Mammary epithelial cell (primary cell): ENCODE measurements at regions of chr18 and their contacts with region 1.

Region 1: DNA sequence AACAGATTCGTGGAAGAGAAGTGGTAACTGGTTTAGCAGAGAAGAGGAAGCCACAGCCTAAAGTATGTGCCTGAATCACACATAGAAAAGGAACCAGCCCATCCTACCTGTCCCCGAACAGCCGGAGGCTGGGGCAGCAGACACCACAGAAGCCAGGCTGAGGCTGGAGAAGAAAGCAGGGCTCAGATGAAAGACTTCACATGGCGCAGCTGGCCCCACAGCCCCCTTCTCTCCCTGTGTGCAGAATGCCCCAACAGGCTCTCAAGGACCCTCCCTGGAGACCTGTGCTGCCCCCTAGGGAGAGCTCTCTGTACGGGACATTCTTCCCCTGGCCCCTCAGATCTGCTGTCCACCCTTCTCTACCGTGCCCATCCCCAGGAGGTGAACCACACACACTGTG is 83.5 kb upstream of the RAB12 start:
- DNase-seq: no peak
- H3K4me3 ChIP-seq: no peak overlapping the region
- H3K27ac ChIP-seq: no peak overlapping the region
- H3K4me1 ChIP-seq: no peaks in the 10 kb centered on the region
- H3K27me3 ChIP-seq: no peaks in the 10 kb centered on the region
- CTCF ChIP-seq: peak; percentile 21 to 38

Region 2: DNA sequence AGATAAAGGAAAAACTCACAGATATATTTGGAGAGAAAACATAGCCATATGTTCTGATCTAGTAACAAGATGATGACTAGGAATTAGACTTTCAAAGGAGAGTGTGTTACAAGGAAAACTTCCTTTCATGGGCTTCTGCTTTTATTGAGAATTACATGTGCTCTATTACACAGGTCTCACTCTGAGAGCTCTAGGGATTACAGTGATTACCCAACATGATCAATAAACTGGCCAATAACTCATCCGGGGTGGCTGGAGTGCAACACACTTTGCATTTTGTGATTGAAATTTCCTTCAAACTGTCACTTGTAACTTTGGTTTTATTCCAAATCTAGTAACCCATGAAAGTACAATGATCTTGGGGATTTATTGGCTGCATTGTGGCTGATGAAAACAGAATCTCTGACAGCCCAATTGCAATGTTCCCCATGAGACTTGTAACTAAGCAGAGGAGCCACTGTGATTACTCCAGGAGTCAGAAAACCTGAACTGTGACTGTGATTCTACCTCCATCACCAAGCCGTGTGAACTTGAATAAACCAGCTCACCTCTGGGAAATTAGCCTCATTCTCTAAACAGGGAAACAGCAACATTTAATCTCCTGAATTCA is 1335.0 kb before region 1 on chr18:
- CTCF ChIA-PET with region 1: interaction called, 17 read pairs
- dilution Hi-C with region 1: no loop called
- in situ Hi-C with region 1: no loop called
- intact Hi-C with region 1: no loop called
- DNase-seq: no peak
- H3K4me3 ChIP-seq: no peak overlapping the region
- H3K27ac ChIP-seq: no peak overlapping the region
- H3K4me1 ChIP-seq: no peaks in the 10 kb centered on the region
- H3K27me3 ChIP-seq: no peaks in the 10 kb centered on the region
- CTCF ChIP-seq: no peak

Region 3: DNA sequence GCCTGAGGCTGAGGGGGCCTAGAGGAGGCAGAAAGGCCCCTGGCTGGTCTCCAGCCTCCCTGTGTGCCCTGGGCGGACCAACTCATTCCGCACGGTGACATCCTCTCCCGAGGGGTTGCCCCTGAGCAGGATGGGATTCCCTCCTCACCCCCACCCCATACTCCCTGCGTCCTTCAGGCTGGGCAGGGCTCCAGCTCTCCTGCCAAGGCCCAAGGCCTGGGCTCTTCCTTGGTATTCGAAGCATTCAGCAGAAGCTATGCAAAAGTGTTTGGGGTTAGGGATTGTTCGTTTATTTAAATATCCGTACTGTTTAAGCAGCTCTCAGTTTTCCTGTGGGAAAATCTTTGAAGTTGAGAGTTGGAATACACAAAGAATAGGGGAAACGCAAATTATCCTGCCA is 29.5 kb before region 1 on chr18:
- CTCF ChIA-PET with region 1: no interaction called
- dilution Hi-C with region 1: no loop called
- in situ Hi-C with region 1: no loop called
- intact Hi-C with region 1: no loop called
- DNase-seq: no peak
- H3K4me3 ChIP-seq: no peak overlapping the region
- H3K27ac ChIP-seq: no peak overlapping the region
- H3K4me1 ChIP-seq: no peaks in the 10 kb centered on the region
- H3K27me3 ChIP-seq: peaks cover 3% of the 10 kb centered on the region
- CTCF ChIP-seq: no peak